H1 (cell line): ENCODE measurements at regions of chr12 and their contacts with region 1.

Region 1: GRCh38 chr12:31406345-31406744 is 80.4 kb upstream of the SINHCAF start:
- DNase-seq: peak in 1 of 2 experiments; percentile 8
- H3K4me3 ChIP-seq: no peak overlapping the region
- H3K27ac ChIP-seq: no peak overlapping the region
- H3K4me1 ChIP-seq: no peaks in the 10 kb centered on the region
- H3K27me3 ChIP-seq: no peaks in the 10 kb centered on the region
- CTCF ChIP-seq: no peak
- EP300 ChIP-seq: no peak
- POLR2A ChIP-seq: no peak
- RAD21 ChIP-seq: no peak

Region 2: GRCh38 chr12:31245822-31246469 is 160.4 kb before region 1 on chr12:
- CTCF ChIA-PET with region 1: interaction called, 12 read pairs
- POLR2A ChIA-PET with region 1: no interaction called
- DNase-seq: no peak
- H3K4me3 ChIP-seq: no peak overlapping the region
- H3K27ac ChIP-seq: no peak overlapping the region
- H3K4me1 ChIP-seq: peaks cover 0 to 7% (median 2%) of the 10 kb centered on the region in 4 experiments; a peak in 2 of 7 replicates
- H3K27me3 ChIP-seq: no peaks in the 10 kb centered on the region
- CTCF ChIP-seq: peak; percentile 22 to 98 (median 66)
- EP300 ChIP-seq: no peak
- POLR2A ChIP-seq: no peak
- RAD21 ChIP-seq: peak; percentile 79 to 87

Region 3: DNA sequence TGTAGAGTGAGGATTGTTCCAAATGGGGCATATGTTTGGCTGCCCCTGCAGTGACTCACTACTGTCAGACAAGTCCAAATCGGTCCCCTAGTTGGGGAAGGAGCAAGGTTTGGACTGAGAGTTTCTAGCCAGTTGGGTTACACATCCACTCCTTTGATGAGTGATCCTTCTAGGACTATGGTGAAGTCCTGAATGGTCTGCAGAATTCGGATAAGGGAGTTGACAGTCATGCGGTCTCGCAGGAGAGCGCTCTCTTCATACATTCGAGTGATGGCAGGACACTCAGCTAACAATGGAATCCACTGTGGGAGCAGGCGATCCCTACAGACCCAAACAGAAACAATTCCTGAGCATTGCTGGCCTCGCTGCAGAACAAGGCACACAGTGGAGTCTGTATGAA is 18.9 kb before region 1 on chr12:
- CTCF ChIA-PET with region 1: interaction called, 19 read pairs
- POLR2A ChIA-PET with region 1: interaction called, 28 read pairs
- DNase-seq: peak in 1 of 2 experiments; percentile 53
- H3K4me3 ChIP-seq: peak overlapping the region in 1 of 4 experiments; percentile 59; a peak in 1 of 8 replicates
- H3K27ac ChIP-seq: peak overlapping the region; percentile 94
- H3K4me1 ChIP-seq: peaks cover 8 to 25% (median 21%) of the 10 kb centered on the region in 4 experiments; a peak in 6 of 7 replicates
- H3K27me3 ChIP-seq: no peaks in the 10 kb centered on the region
- CTCF ChIP-seq: no peak
- EP300 ChIP-seq: no peak
- POLR2A ChIP-seq: no peak
- RAD21 ChIP-seq: no peak

Region 4: GRCh38 chr12:31423405-31423804 is 17.1 kb after region 1 on chr12:
- CTCF ChIA-PET with region 1: interaction called, 13 read pairs
- POLR2A ChIA-PET with region 1: no interaction called
- DNase-seq: no peak
- H3K4me3 ChIP-seq: no peak overlapping the region
- H3K27ac ChIP-seq: no peak overlapping the region
- H3K4me1 ChIP-seq: no peaks in the 10 kb centered on the region
- H3K27me3 ChIP-seq: no peaks in the 10 kb centered on the region
- CTCF ChIP-seq: no peak
- EP300 ChIP-seq: no peak
- POLR2A ChIP-seq: no peak
- RAD21 ChIP-seq: no peak

Region 5: DNA sequence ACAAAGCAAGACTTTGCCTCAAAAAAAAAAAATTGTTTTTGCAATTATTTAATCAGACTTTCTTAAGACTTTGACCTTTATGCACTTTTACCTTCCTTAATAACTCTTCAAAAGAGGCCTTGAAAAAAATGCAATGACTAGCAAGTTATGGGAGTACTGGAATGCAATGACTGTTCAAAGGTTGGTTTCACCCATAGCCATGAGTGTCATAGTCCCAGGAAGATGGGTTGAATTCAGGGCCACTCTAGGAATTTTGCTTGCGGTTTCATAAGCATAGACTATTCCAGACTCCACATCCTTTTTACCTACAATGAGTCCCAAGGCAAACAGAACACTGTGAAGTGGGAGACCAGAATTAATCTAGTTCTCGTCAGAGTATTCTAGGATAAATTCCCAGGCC is 214.0 kb after region 1 on chr12:
- CTCF ChIA-PET with region 1: interaction called, 16 read pairs
- POLR2A ChIA-PET with region 1: no interaction called
- DNase-seq: no peak
- H3K4me3 ChIP-seq: no peak overlapping the region
- H3K27ac ChIP-seq: no peak overlapping the region
- H3K4me1 ChIP-seq: no peaks in the 10 kb centered on the region
- H3K27me3 ChIP-seq: no peaks in the 10 kb centered on the region
- CTCF ChIP-seq: no peak
- EP300 ChIP-seq: no peak
- POLR2A ChIP-seq: no peak
- RAD21 ChIP-seq: no peak

Region 6: DNA sequence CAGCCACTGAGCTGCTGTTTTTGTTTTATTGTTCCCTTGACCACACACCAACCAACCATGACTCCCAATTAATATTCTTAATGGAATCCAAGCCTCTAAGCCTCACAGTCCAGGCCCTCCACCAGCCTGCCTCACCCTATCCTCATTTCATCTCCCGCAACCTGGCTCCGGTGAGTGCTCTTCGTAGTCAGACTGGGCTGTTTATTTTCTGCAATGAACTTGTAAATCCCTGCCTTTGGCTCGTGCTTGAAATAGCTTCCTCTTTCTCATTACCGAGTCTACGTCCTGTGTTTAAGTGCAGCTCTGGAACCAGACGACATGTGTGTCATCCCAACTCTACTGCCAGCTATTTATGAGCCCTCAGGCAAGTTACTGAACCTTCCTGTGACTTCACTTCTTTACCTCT is 240.7 kb after region 1 on chr12:
- CTCF ChIA-PET with region 1: interaction called, 18 read pairs
- POLR2A ChIA-PET with region 1: interaction called, 4 read pairs
- DNase-seq: no peak
- H3K4me3 ChIP-seq: no peak overlapping the region
- H3K27ac ChIP-seq: no peak overlapping the region
- H3K4me1 ChIP-seq: no peaks in the 10 kb centered on the region
- H3K27me3 ChIP-seq: no peaks in the 10 kb centered on the region
- CTCF ChIP-seq: no peak
- EP300 ChIP-seq: no peak
- POLR2A ChIP-seq: no peak
- RAD21 ChIP-seq: no peak